ENCODE measurements at regions of chr5 and their contacts with region 1.

Region 1: DNA sequence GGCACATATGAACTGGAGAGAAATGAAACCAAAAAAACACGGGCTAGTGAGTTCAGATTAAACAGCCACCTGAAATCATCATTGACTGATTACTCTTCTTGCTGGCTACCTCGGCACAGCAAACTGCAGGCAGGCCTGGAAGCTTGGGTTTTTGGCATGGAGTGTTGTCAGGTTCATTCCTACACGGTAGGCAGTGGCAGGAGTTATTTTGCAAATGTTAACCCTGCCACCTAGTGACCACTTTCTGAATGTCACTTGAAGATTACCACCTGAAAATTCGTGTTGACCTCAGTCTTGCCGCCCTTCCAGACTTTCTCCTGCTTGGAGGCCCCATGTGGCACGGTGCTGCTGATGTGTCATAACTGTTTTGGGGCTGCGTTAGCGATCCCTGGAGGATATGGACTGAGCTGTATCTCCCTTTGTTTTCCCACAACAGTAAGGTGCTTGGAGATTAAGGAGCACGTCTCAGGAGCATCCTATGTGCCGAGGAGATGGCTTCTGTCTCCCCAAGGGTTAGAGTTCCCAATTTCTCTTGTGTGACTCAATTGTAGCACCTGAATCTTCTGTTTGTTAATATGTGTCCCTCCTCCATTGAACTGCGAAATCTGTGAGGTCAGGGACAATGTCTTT is 12.7 kb upstream of the CD180 start:
- DNase-seq: peak; percentile 14 to 73 (median 64)
- H3K4me3 ChIP-seq: no peak overlapping the region
- H3K4me3 Mint-ChIP-seq: peak overlapping the region in 5 of 7 donors; percentile 34 to 67 (median 41)
- H3K27ac ChIP-seq: no peak overlapping the region
- H3K27ac Mint-ChIP-seq: peak overlapping the region; percentile 24 to 86 (median 78)
- H3K4me1 ChIP-seq: peaks cover 55% of the 10 kb centered on the region
- H3K4me1 Mint-ChIP-seq: peaks cover 59 to 63% (median 62%) of the 10 kb centered on the region in 3 donors
- H3K27me3 ChIP-seq: no peaks in the 10 kb centered on the region
- H3K27me3 Mint-ChIP-seq: no peaks in the 10 kb centered on the region

Region 2: GRCh38 chr5:66814146-66814991 is 394.9 kb before region 1 on chr5:
- CTCF ChIA-PET with region 1: interaction called, 11 read pairs
- POLR2A ChIA-PET with region 1: no interaction called
- DNase-seq: peak in 3 of 5 donors; percentile 16 to 49 (median 30)
- H3K4me3 ChIP-seq: no peak overlapping the region
- H3K4me3 Mint-ChIP-seq: no peak overlapping the region
- H3K27ac ChIP-seq: no peak overlapping the region
- H3K27ac Mint-ChIP-seq: peak overlapping the region in 1 of 8 donors; percentile 12
- H3K4me1 ChIP-seq: no peaks in the 10 kb centered on the region
- H3K4me1 Mint-ChIP-seq: peaks cover 0 to 3% (median 3%) of the 10 kb centered on the region in 3 donors
- H3K27me3 ChIP-seq: no peaks in the 10 kb centered on the region
- H3K27me3 Mint-ChIP-seq: peaks cover 7 to 12% of the 10 kb centered on the region in 2 donors

Region 3: GRCh38 chr5:67156976-67157583 is 52.2 kb before region 1 on chr5:
- CTCF ChIA-PET with region 1: interaction called, 342 read pairs
- POLR2A ChIA-PET with region 1: interaction called, 17 read pairs
- DNase-seq: peak; percentile 30 to 68 (median 44)
- H3K4me3 ChIP-seq: no peak overlapping the region
- H3K4me3 Mint-ChIP-seq: peak overlapping the region in 1 of 7 donors; percentile 28
- H3K27ac ChIP-seq: no peak overlapping the region
- H3K27ac Mint-ChIP-seq: peak overlapping the region; percentile 13 to 63 (median 54)
- H3K4me1 ChIP-seq: peaks cover 47% of the 10 kb centered on the region
- H3K4me1 Mint-ChIP-seq: peaks cover 44 to 59% (median 54%) of the 10 kb centered on the region in 3 donors
- H3K27me3 ChIP-seq: no peaks in the 10 kb centered on the region
- H3K27me3 Mint-ChIP-seq: no peaks in the 10 kb centered on the region

Region 4: DNA sequence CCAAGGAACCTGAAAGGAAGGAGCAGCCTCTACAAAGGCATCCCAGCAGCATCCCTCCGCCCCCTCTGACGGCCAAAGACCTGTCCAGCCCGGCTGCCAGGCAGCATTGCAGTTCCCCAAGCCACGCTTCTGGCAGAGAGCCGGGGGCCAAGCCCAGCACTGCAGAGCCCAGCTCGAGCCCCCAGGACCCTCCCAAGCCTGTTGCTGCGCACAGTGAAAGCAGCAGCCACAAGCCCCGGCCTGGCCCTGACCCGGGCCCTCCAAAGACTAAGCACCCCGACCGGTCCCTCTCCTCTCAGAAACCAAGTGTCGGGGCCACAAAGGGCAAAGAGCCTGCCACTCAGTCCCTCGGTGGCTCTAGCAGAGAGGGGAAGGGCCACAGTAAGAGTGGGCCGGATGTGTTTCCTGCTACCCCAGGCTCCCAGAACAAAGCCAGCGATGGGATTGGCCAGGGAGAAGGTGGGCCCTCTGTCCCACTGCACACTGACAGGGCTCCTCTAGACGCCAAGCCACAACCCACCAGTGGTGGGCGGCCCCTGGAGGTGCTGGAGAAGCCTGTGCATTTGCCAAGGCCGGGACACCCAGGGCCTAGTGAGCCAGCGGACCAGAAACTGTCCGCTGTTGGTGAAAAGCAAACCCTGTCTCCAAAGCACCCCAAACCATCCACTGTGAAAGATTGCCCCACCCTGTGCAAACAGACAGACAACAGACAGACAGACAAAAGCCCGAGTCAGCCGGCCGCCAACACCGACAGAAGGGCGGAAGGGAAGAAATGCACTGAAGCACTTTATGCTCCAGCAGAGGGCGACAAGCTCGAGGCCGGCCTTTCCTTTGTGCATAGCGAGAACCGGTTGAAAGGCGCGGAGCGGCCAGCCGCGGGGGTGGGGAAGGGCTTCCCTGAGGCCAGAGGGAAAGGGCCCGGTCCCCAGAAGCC is 43.5 kb before region 1 on chr5:
- CTCF ChIA-PET with region 1: interaction called, 342 read pairs
- POLR2A ChIA-PET with region 1: interaction called, 61 read pairs
- DNase-seq: peak; percentile 65 to 88 (median 81)
- H3K4me3 ChIP-seq: peak overlapping the region; percentile 68
- H3K4me3 Mint-ChIP-seq: peak overlapping the region; percentile 88 to 97 (median 95)
- H3K27ac ChIP-seq: peak overlapping the region; percentile 69
- H3K27ac Mint-ChIP-seq: peak overlapping the region; percentile 96 to 100 (median 99)
- H3K4me1 ChIP-seq: peaks cover 69% of the 10 kb centered on the region
- H3K4me1 Mint-ChIP-seq: peaks cover 55 to 78% (median 67%) of the 10 kb centered on the region in 3 donors
- H3K27me3 ChIP-seq: no peaks in the 10 kb centered on the region
- H3K27me3 Mint-ChIP-seq: no peaks in the 10 kb centered on the region

Region 5: DNA sequence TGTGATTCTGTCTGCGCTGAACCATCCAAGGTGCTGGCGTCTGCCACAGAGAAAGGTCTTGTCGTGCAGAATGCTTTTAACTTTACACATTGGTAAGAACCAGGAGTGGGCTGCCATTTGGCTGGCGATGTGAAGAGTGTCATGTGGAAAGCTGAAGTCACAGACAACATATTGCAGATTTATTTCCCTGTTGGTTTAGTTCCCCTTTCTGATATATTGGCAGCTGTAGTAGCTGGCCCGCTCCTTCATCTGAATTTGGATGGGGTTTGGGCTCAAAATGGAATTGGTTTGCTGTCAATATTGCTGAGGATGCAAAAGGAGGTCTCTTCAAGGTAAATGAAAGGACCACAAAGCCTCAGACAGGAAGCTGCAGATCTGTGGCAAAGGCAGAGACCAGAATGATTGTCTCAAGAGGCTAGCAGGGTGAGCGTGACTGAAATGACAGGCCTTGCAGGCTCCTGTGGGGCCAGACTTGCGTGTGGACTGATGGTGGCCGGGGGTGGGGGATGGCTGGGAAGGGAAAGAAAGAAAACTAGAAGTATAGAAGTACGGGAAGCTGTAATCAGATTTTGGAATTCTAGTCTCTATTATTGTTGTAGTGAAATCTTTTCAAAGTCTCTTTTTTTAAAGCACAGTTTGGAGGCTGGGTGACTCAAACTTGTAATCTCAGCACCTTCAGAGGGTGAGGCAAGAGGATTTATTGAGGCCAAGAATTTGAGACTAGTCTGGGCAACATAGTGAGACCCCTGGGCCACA is 12.4 kb after region 1 on chr5:
- CTCF ChIA-PET with region 1: interaction called, 12 read pairs
- POLR2A ChIA-PET with region 1: no interaction called
- DNase-seq: peak; percentile 18 to 70 (median 57)
- H3K4me3 ChIP-seq: peak overlapping the region; percentile 11
- H3K4me3 Mint-ChIP-seq: peak overlapping the region; percentile 22 to 83 (median 75)
- H3K27ac ChIP-seq: no peak overlapping the region
- H3K27ac Mint-ChIP-seq: peak overlapping the region; percentile 86 to 100 (median 92)
- H3K4me1 ChIP-seq: peaks cover 55% of the 10 kb centered on the region
- H3K4me1 Mint-ChIP-seq: peaks cover 56 to 67% (median 63%) of the 10 kb centered on the region in 3 donors
- H3K27me3 ChIP-seq: no peaks in the 10 kb centered on the region
- H3K27me3 Mint-ChIP-seq: peaks cover 0 to 4% of the 10 kb centered on the region in 2 donors

Region 6: DNA sequence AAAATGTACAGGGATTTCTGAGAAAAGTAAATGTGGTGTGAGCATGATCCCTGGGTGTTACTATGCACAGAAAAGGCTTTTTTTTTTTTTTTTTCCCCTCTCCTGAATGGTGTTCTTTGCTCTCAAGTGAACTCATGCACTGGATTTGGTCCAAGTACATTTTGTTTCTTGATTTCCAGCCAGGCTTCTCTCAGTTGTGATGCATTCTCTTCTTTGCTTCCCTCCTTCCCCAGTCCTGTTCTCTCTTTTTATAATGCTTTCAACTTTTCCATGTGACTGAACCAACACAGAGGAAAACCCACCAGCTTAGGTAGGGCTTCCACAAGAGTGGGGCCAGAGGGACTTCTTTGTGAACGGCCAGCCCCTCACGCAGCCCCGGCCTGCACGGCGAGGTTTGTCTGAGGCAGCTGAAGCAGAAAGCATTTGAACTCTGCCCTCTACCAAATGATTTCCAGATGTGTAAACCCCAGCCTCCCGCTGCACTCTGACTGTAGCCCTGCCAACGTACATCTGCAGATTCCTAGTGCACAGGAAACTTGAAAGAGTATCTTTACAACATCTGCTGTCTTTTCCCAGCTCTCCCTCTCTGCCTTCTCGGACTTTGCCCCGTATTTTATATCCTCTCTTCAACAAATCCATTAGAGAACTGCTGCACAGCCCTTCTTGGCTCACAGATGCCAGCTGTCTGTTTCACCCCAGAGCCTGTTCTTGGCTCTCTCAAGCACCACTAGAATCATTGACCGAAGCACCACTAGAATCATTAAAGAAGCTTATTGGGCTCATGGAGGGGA is 59.2 kb after region 1 on chr5:
- CTCF ChIA-PET with region 1: no interaction called
- POLR2A ChIA-PET with region 1: no interaction called
- DNase-seq: no peak
- H3K4me3 ChIP-seq: no peak overlapping the region
- H3K4me3 Mint-ChIP-seq: no peak overlapping the region
- H3K27ac ChIP-seq: no peak overlapping the region
- H3K27ac Mint-ChIP-seq: no peak overlapping the region
- H3K4me1 ChIP-seq: no peaks in the 10 kb centered on the region
- H3K4me1 Mint-ChIP-seq: no peaks in the 10 kb centered on the region
- H3K27me3 ChIP-seq: no peaks in the 10 kb centered on the region
- H3K27me3 Mint-ChIP-seq: no peaks in the 10 kb centered on the region